Transverse colon (tissue), 4 donors: ENCODE measurements at regions of chr14 and their contacts with region 1.

Region 1: DNA sequence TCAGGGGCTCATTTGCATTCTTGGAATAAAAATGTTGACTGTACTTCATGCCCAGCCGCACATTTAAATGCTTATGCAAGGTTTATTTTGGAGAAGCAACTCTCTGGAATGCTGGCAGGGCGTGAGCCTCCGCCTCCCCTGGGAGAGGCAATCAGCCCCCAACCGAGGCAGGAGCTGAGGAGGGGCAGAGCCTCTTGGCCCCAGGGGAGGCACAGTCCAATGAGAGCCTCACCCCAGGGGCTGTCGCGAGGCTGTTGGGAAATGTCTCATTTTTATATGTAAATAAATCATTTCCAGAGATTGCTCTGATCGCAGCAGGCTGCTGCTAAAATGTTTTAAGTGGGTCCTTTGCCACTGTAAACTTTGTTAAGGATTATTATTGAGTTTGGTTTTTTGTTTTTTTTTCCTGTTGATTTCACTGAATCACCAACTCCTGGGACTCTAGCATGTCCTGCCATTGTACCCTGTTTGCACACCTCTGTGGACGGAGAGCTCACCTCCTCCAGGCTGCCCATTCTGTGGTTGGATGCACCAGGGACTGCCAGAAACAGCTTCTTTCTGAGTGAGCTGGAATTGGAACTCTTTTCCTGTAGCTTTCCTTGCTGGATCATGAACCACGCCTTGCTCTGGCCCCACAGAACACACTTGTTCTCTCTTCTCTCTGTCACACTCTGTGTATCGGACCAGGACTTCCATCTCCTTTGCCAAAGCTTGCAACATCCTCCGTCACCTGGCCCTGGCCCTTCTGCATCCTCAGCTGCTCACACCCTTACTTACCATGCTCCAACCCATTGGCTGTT is 46.9 kb upstream of the FAM181A start:
- DNase-seq: no peak
- H3K4me3 ChIP-seq: no peak overlapping the region
- H3K27ac ChIP-seq: no peak overlapping the region
- H3K4me1 ChIP-seq: peaks cover 0 to 11% (median 2%) of the 10 kb centered on the region in 4 donors
- H3K27me3 ChIP-seq: no peaks in the 10 kb centered on the region
- CTCF ChIP-seq: no peak
- EP300 ChIP-seq: no peak
- POLR2A ChIP-seq: no peak

Region 2: GRCh38 chr14:93533472-93534241 is 346.6 kb before region 1 on chr14:
- in situ Hi-C with region 1: no loop called
- intact Hi-C with region 1: no loop called
- DNase-seq: no peak
- H3K4me3 ChIP-seq: no peak overlapping the region
- H3K27ac ChIP-seq: peak overlapping the region in 1 of 4 donors; percentile 8
- H3K4me1 ChIP-seq: peaks cover 0 to 3% (median 0%) of the 10 kb centered on the region in 4 donors
- H3K27me3 ChIP-seq: no peaks in the 10 kb centered on the region
- CTCF ChIP-seq: no peak
- EP300 ChIP-seq: no peak
- POLR2A ChIP-seq: no peak

Region 3: GRCh38 chr14:93804646-93805045 is 75.6 kb before region 1 on chr14:
- in situ Hi-C with region 1: no loop called
- intact Hi-C with region 1: loop called (anchors 5 kb)
- DNase-seq: no peak
- H3K4me3 ChIP-seq: no peak overlapping the region
- H3K27ac ChIP-seq: no peak overlapping the region
- H3K4me1 ChIP-seq: peaks cover 3 to 15% (median 9%) of the 10 kb centered on the region in 4 donors
- H3K27me3 ChIP-seq: no peaks in the 10 kb centered on the region
- CTCF ChIP-seq: no peak
- EP300 ChIP-seq: no peak
- POLR2A ChIP-seq: no peak